ENCODE measurements at regions of chr10 and their contacts with region 1.

Region 1: GRCh38 chr10:14889318-14889717 is 10.7 kb downstream of the SUV39H2 start:
- DNase-seq: peak in 1 of 35 experiments; percentile 36
- ATAC-seq: no peak
- H3K4me3 ChIP-seq: no peak overlapping the region
- H3K4me3 Mint-ChIP-seq: no peak overlapping the region
- H3K27ac ChIP-seq: no peak overlapping the region
- H3K27ac Mint-ChIP-seq: peak overlapping the region in 1 of 2 donors; percentile 23
- H3K4me1 ChIP-seq: peaks cover 0 to 3% of the 10 kb centered on the region in 2 experiments
- H3K4me1 Mint-ChIP-seq: peaks cover 5 to 11% (median 5%) of the 10 kb centered on the region in 3 donors
- H3K27me3 ChIP-seq: no peaks in the 10 kb centered on the region
- H3K27me3 Mint-ChIP-seq: no peaks in the 10 kb centered on the region

Region 2: GRCh38 chr10:14843327-14843988 is 45.9 kb before region 1 on chr10:
- CTCF ChIA-PET with region 1: no interaction called
- POLR2A ChIA-PET with region 1: no interaction called
- DNase-seq: no peak
- ATAC-seq: no peak
- H3K4me3 ChIP-seq: no peak overlapping the region
- H3K4me3 Mint-ChIP-seq: no peak overlapping the region
- H3K27ac ChIP-seq: no peak overlapping the region
- H3K27ac Mint-ChIP-seq: no peak overlapping the region
- H3K4me1 ChIP-seq: peaks cover 6 to 12% of the 10 kb centered on the region in 2 experiments
- H3K4me1 Mint-ChIP-seq: peaks cover 28 to 30% (median 30%) of the 10 kb centered on the region in 3 donors
- H3K27me3 ChIP-seq: no peaks in the 10 kb centered on the region
- H3K27me3 Mint-ChIP-seq: no peaks in the 10 kb centered on the region

Region 3: GRCh38 chr10:14905890-14906289 is 16.6 kb after region 1 on chr10:
- CTCF ChIA-PET with region 1: interaction called, 3 to 6 read pairs
- POLR2A ChIA-PET with region 1: interaction called in 1 of 2 experiments, 15 read pairs
- DNase-seq: peak in 2 of 35 experiments; percentile 23 to 35
- ATAC-seq: peak; percentile 19 to 87 (median 42)
- H3K4me3 ChIP-seq: no peak overlapping the region
- H3K4me3 Mint-ChIP-seq: no peak overlapping the region
- H3K27ac ChIP-seq: no peak overlapping the region
- H3K27ac Mint-ChIP-seq: peak overlapping the region; percentile 11 to 70
- H3K4me1 ChIP-seq: peaks cover 0 to 2% of the 10 kb centered on the region in 2 experiments
- H3K4me1 Mint-ChIP-seq: peaks cover 19 to 21% (median 20%) of the 10 kb centered on the region in 3 donors
- H3K27me3 ChIP-seq: no peaks in the 10 kb centered on the region
- H3K27me3 Mint-ChIP-seq: no peaks in the 10 kb centered on the region